ENCODE measurements at regions of chr7 and their contacts with region 1.

Region 1: DNA sequence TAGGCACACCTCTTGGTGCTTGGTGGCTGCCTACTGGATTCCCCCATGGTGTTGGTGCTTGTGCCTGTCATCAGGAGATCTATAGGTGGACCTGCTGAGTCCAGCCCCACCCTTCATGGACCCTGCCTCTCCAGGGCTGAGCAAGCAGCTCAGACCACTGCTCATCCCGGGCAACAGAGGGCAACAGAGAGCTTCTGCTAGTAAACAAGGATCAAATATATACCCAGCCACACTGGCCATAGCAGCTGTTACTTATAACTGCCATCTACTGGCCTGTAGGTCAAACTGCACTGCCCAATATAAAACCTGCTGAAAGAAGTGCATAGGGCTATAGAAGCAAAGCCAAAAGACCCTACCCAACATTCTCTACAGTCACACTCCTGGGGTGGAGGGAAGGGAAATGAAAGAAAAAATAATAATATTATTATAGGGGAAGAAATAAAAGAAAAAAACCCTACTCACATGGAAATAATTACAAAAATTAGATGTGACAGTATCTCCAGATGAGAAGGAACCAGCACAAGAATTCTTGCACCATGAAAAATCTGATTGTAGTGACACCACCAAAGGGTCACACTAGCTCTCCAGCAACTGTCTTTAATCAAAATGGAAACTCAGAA is 54.9 kb upstream of the ZNF800 start:
- DNase-seq: peak; percentile 44 to 80
- ATAC-seq: peak; percentile 99 to 100 (median 100)
- H3K4me3 ChIP-seq: no peak overlapping the region
- H3K4me3 Mint-ChIP-seq: no peak overlapping the region
- H3K27ac ChIP-seq: no peak overlapping the region
- H3K27ac Mint-ChIP-seq: no peak overlapping the region
- H3K4me1 ChIP-seq: peaks cover 6% of the 10 kb centered on the region
- H3K4me1 Mint-ChIP-seq: peaks cover 0 to 5% of the 10 kb centered on the region in 2 donors
- H3K27me3 ChIP-seq: peaks cover 17% of the 10 kb centered on the region
- H3K27me3 Mint-ChIP-seq: peaks cover 38 to 51% of the 10 kb centered on the region in 2 donors
- CTCF ChIP-seq: peak; percentile 97

Region 2: DNA sequence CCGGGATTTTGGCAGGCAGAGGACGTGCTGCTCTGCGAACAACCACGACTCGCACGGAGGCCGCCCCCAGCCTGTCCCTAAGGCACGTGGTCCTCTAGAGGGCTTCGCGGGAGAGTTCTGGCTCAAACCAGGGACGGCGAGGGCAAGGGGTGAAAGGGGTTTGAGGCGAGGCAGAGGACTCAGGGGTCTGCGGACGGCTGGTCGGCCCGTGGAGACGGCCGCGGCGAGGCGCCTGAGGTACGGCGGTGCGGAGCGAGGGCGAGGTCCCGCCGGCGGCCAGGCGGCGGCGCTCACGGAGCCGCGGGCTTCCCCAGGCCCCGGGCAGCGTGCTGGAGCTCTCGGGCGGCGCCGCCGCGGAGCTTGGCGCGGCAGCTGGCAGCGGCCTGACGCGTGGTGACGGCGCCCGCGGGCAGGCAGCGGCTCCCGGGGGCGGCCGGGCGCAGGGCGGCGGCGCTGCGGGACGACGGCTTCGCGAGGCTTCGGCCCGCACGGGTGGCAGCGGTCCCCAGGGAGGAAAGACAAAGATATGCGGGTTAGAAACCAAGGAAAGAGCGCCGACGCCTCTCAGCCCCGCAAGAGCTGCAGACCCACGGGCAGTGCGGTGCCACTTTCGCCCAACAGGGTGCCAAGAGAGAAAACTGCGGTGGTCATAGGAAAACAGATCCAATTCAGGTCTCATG is 99.7 kb before region 1 on chr7:
- intact Hi-C with region 1: loop called (anchors 1 kb)
- DNase-seq: peak; percentile 71 to 88
- ATAC-seq: peak; percentile 98 to 99 (median 99)
- H3K4me3 ChIP-seq: peak overlapping the region; percentile 35
- H3K4me3 Mint-ChIP-seq: peak overlapping the region; percentile 80
- H3K27ac ChIP-seq: no peak overlapping the region
- H3K27ac Mint-ChIP-seq: peak overlapping the region in 1 of 2 donors; percentile 11
- H3K4me1 ChIP-seq: peaks cover 7% of the 10 kb centered on the region
- H3K4me1 Mint-ChIP-seq: peaks cover 16 to 38% of the 10 kb centered on the region in 2 donors
- H3K27me3 ChIP-seq: no peaks in the 10 kb centered on the region
- H3K27me3 Mint-ChIP-seq: peaks cover 0 to 2% of the 10 kb centered on the region in 2 donors
- CTCF ChIP-seq: peak; percentile 44

Region 3: DNA sequence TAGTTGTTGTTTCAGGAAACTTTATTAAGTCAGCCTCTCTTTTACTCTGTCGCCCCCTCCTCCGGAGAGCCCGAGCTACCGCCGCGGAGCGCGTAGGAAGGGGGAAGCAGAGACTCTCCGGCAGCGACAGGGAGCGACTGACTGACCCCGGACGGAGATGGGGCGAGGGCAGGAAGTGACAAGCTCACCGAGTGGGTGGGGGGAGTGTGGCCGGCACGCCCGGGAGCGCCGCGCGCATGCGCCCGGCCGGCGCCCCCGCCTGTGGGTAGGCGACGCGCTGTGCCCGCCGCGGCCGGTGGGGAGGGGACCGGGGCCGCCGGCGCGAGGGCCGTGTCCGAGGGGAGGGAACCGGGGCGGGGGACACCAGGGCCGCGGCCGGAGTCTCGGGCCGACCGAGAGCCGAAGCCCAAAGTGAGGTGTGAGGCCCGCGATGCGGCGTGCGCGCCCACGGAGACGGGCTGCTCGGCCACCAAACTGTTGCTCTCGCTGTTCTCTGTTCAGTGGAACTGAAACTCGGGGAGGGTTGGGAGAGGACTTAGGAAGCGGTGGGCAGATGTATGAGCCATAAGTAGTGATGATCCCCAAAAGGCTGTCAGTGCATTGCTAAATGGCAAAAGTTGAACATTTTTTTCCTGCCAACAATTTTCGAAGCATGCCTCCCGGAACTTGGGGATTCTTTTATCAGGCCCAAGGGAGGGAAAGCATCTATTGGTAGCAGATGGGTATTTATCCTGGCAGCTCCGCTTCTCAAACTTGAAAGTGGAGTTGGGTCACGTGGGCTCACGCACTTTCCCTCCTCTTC is 54.7 kb before region 1 on chr7 and contains the start of gene ZNF800:
- intact Hi-C with region 1: loop called (anchors 2 kb)
- DNase-seq: peak; percentile 85 to 93
- ATAC-seq: peak; percentile 80 to 93 (median 85)
- H3K4me3 ChIP-seq: peak within 1 kb of the TSS; percentile 88
- H3K4me3 Mint-ChIP-seq: peak within 1 kb of the TSS; percentile 98
- H3K27ac ChIP-seq: peak within 1 kb of the TSS; percentile 96
- H3K27ac Mint-ChIP-seq: peak within 1 kb of the TSS; percentile 96 to 97
- H3K4me1 ChIP-seq: peaks cover 15% of the 10 kb centered on the region
- H3K4me1 Mint-ChIP-seq: peaks cover 43 to 56% of the 10 kb centered on the region in 2 donors
- H3K27me3 ChIP-seq: no peaks in the 10 kb centered on the region
- H3K27me3 Mint-ChIP-seq: no peaks in the 10 kb centered on the region
- CTCF ChIP-seq: no peak
- total RNA-seq, gene ZNF800: 93.3 to 107 (median 101) TPM

Region 4: DNA sequence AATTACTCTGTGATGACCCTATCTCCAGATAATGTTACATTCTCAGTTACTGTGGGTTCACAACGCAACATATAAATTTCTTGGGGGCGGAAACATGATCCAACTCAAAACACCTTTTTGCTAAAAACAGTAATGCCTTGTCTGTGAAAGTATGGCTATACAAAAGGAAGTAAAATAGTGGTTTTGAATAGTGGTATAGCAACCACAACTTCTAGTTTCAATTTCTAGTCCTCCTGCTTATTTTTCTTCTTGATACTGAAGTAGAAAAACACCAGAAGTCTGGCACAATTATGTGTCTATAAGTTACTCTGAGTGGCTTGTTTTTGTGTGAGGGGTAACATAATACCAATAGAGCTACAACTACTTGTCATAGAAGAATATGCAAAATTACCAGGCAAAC is 33.5 kb before region 1 on chr7:
- intact Hi-C with region 1: loop called (anchors 1 kb)
- DNase-seq: peak in 1 of 2 donors; percentile 66
- ATAC-seq: peak; percentile 76 to 87 (median 77)
- H3K4me3 ChIP-seq: no peak overlapping the region
- H3K4me3 Mint-ChIP-seq: peak overlapping the region; percentile 79
- H3K27ac ChIP-seq: peak overlapping the region; percentile 93
- H3K27ac Mint-ChIP-seq: peak overlapping the region; percentile 90 to 93
- H3K4me1 ChIP-seq: peaks cover 34% of the 10 kb centered on the region
- H3K4me1 Mint-ChIP-seq: peaks cover 42 to 46% of the 10 kb centered on the region in 2 donors
- H3K27me3 ChIP-seq: no peaks in the 10 kb centered on the region
- H3K27me3 Mint-ChIP-seq: no peaks in the 10 kb centered on the region
- CTCF ChIP-seq: no peak